CD8-positive, alpha-beta memory T cell (primary cell): ENCODE measurements at regions of chrX and their contacts with region 1.

Region 1: DNA sequence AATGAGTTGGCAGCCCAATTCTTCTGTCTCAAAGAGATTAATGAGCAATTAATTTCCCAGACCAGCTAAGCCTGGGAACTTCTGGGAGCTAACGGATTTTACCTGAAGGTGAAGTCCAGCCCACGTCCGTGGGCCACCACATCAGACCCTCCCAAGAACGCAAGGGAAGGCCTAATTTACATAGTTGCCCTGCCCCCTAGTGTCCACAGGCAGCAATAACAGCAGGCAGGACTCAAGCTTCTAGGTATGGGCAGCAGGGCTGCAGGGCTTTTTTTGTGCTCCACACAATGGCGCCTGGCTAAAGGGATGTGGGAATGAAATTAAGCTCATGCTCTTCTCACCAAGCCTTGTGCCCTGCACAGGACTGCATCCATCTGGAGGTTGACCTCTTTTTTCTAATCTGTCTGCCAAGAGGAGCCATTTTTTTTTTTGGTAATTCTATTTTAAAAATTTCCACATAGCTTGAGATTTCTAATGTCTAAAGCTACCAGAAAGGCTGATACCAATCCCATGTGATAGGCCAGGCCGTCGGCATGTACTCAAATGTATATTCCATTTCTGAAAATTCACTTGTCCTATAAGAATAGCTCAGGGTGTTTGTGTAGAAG is 111.9 kb upstream of the TMEM164 start:
- DNase-seq: peak; percentile 12 to 62 (median 19)
- H3K4me3 ChIP-seq: no peak overlapping the region
- H3K4me3 Mint-ChIP-seq: no peak overlapping the region
- H3K27ac ChIP-seq: no peak overlapping the region
- H3K27ac Mint-ChIP-seq: no peak overlapping the region
- H3K4me1 ChIP-seq: no peaks in the 10 kb centered on the region
- H3K4me1 Mint-ChIP-seq: no peaks in the 10 kb centered on the region
- H3K27me3 ChIP-seq: no peaks in the 10 kb centered on the region
- H3K27me3 Mint-ChIP-seq: peaks cover 4 to 8% of the 10 kb centered on the region in 2 donors

Region 2: GRCh38 chrX:109485470-109486340 is 405.3 kb before region 1 on chrX:
- CTCF ChIA-PET with region 1: interaction called, 10 read pairs
- POLR2A ChIA-PET with region 1: no interaction called
- DNase-seq: peak; percentile 18 to 59 (median 53)
- H3K4me3 ChIP-seq: no peak overlapping the region
- H3K4me3 Mint-ChIP-seq: no peak overlapping the region
- H3K27ac ChIP-seq: no peak overlapping the region
- H3K27ac Mint-ChIP-seq: no peak overlapping the region
- H3K4me1 ChIP-seq: no peaks in the 10 kb centered on the region
- H3K4me1 Mint-ChIP-seq: peaks cover 0 to 1% (median 0%) of the 10 kb centered on the region in 3 donors
- H3K27me3 ChIP-seq: no peaks in the 10 kb centered on the region
- H3K27me3 Mint-ChIP-seq: peaks cover 3 to 5% of the 10 kb centered on the region in 2 donors

Region 3: GRCh38 chrX:109880629-109881028 is 10.4 kb before region 1 on chrX:
- CTCF ChIA-PET with region 1: interaction called, 17 read pairs
- POLR2A ChIA-PET with region 1: interaction called, 3 read pairs
- DNase-seq: no peak
- H3K4me3 ChIP-seq: no peak overlapping the region
- H3K4me3 Mint-ChIP-seq: no peak overlapping the region
- H3K27ac ChIP-seq: no peak overlapping the region
- H3K27ac Mint-ChIP-seq: no peak overlapping the region
- H3K4me1 ChIP-seq: no peaks in the 10 kb centered on the region
- H3K4me1 Mint-ChIP-seq: no peaks in the 10 kb centered on the region
- H3K27me3 ChIP-seq: no peaks in the 10 kb centered on the region
- H3K27me3 Mint-ChIP-seq: peaks cover 0 to 9% of the 10 kb centered on the region in 2 donors

Region 4: DNA sequence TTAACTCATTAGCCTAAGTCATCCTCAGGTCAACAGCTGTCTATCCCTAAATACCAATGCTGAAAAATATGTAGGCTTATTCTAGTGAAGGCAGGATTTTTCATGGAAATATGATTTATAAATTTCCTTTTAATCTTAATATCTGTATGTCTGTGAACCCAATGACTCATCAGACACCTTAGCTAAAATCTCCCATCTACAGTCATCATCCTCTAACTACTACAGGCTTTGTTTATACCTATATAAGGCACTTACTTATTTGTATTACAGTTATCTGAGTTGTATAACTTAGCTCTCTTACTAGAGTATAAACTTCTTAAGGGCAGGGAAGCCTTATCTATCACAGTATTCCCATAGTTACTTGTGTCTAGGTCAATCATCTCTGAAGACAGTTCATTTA is 402.7 kb after region 1 on chrX:
- CTCF ChIA-PET with region 1: no interaction called
- POLR2A ChIA-PET with region 1: no interaction called
- DNase-seq: no peak
- H3K4me3 ChIP-seq: no peak overlapping the region
- H3K4me3 Mint-ChIP-seq: no peak overlapping the region
- H3K27ac ChIP-seq: no peak overlapping the region
- H3K27ac Mint-ChIP-seq: peak overlapping the region in 1 of 8 donors; percentile 14
- H3K4me1 ChIP-seq: no peaks in the 10 kb centered on the region
- H3K4me1 Mint-ChIP-seq: peaks cover 10 to 38% (median 24%) of the 10 kb centered on the region in 3 donors
- H3K27me3 ChIP-seq: no peaks in the 10 kb centered on the region
- H3K27me3 Mint-ChIP-seq: no peaks in the 10 kb centered on the region